CD4-positive, alpha-beta memory T cell (primary cell): ENCODE measurements at regions of chr18 and their contacts with region 1.

Region 1: DNA sequence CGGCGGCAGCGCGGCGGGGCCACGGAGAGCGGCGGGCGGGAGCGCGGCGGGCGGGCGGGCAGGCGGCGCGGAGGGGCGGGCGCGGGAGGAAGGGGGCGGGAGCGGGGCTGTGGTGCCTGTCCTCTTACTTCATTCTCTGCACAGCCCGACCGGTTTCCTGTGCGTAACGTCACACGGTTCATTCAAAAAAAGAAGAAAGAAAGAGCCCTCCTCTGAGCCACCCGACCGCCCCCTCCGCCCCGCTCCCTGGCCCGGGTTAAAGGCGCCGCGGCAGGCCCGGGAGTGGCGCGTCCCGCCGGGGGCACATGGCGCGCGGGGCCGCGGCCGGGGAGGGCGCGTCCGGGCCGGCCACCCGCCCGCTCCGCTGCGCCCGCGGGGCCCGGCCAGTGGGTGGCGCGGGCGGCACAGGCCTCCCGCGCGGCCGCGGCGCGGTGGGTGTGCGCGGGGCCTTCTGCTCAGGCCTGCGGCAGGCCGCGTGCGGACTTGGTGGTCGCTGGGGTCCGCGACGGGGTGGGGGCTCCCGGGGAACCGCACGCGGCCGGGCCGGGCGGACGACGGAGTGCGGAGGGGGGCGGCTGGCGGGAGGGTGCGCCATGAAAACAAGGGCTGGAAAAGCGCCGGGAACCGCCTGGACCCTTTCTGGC is 599 bp upstream of the BCL2 start:
- DNase-seq: peak; percentile 88 to 95 (median 91)
- H3K4me3 ChIP-seq: peak overlapping the region in 1 of 2 donors; percentile 48
- H3K4me3 Mint-ChIP-seq: peak overlapping the region; percentile 86 to 99 (median 90)
- H3K27ac ChIP-seq: peak overlapping the region; percentile 58
- H3K27ac Mint-ChIP-seq: peak overlapping the region; percentile 91 to 97 (median 95)
- H3K4me1 ChIP-seq: peaks cover 32% of the 10 kb centered on the region
- H3K4me1 Mint-ChIP-seq: peaks cover 18 to 65% (median 28%) of the 10 kb centered on the region in 4 donors
- H3K27me3 ChIP-seq: no peaks in the 10 kb centered on the region
- H3K27me3 Mint-ChIP-seq: no peaks in the 10 kb centered on the region

Region 2: GRCh38 chr18:61876899-61877298 is 1443.3 kb before region 1 on chr18:
- CTCF ChIA-PET with region 1: no interaction called
- POLR2A ChIA-PET with region 1: no interaction called
- intact Hi-C with region 1: no loop called
- DNase-seq: no peak
- H3K4me3 ChIP-seq: no peak overlapping the region
- H3K4me3 Mint-ChIP-seq: no peak overlapping the region
- H3K27ac ChIP-seq: no peak overlapping the region
- H3K27ac Mint-ChIP-seq: no peak overlapping the region
- H3K4me1 ChIP-seq: no peaks in the 10 kb centered on the region
- H3K4me1 Mint-ChIP-seq: no peaks in the 10 kb centered on the region
- H3K27me3 ChIP-seq: no peaks in the 10 kb centered on the region
- H3K27me3 Mint-ChIP-seq: peaks cover 7 to 12% of the 10 kb centered on the region in 2 donors

Region 3: GRCh38 chr18:62802523-62802922 is 517.6 kb before region 1 on chr18:
- CTCF ChIA-PET with region 1: no interaction called
- POLR2A ChIA-PET with region 1: no interaction called
- intact Hi-C with region 1: no loop called
- DNase-seq: no peak
- H3K4me3 ChIP-seq: no peak overlapping the region
- H3K4me3 Mint-ChIP-seq: no peak overlapping the region
- H3K27ac ChIP-seq: no peak overlapping the region
- H3K27ac Mint-ChIP-seq: no peak overlapping the region
- H3K4me1 ChIP-seq: no peaks in the 10 kb centered on the region
- H3K4me1 Mint-ChIP-seq: peaks cover 0 to 2% (median 0%) of the 10 kb centered on the region in 4 donors
- H3K27me3 ChIP-seq: no peaks in the 10 kb centered on the region
- H3K27me3 Mint-ChIP-seq: no peaks in the 10 kb centered on the region

Region 4: GRCh38 chr18:63016270-63016669 is 303.9 kb before region 1 on chr18:
- CTCF ChIA-PET with region 1: interaction called, 113 read pairs
- POLR2A ChIA-PET with region 1: interaction called, 8 read pairs
- intact Hi-C with region 1: no loop called
- DNase-seq: peak; percentile 51 to 62 (median 56)
- H3K4me3 ChIP-seq: no peak overlapping the region
- H3K4me3 Mint-ChIP-seq: no peak overlapping the region
- H3K27ac ChIP-seq: no peak overlapping the region
- H3K27ac Mint-ChIP-seq: no peak overlapping the region
- H3K4me1 ChIP-seq: no peaks in the 10 kb centered on the region
- H3K4me1 Mint-ChIP-seq: peaks cover 0 to 2% (median 0%) of the 10 kb centered on the region in 4 donors
- H3K27me3 ChIP-seq: peaks cover 5% of the 10 kb centered on the region
- H3K27me3 Mint-ChIP-seq: peaks cover 5 to 6% of the 10 kb centered on the region in 2 donors

Region 5: GRCh38 chr18:63138436-63139340 is 181.5 kb before region 1 on chr18:
- CTCF ChIA-PET with region 1: interaction called, 175 read pairs
- POLR2A ChIA-PET with region 1: interaction called, 42 read pairs
- intact Hi-C with region 1: loop called (anchors 1 kb)
- DNase-seq: no peak
- H3K4me3 ChIP-seq: peak overlapping the region; percentile 23 to 53
- H3K4me3 Mint-ChIP-seq: peak overlapping the region; percentile 82 to 92 (median 88)
- H3K27ac ChIP-seq: peak overlapping the region; percentile 32
- H3K27ac Mint-ChIP-seq: peak overlapping the region; percentile 76 to 96 (median 94)
- H3K4me1 ChIP-seq: peaks cover 70% of the 10 kb centered on the region
- H3K4me1 Mint-ChIP-seq: peaks cover 57 to 90% (median 73%) of the 10 kb centered on the region in 4 donors
- H3K27me3 ChIP-seq: no peaks in the 10 kb centered on the region
- H3K27me3 Mint-ChIP-seq: no peaks in the 10 kb centered on the region

Region 6: GRCh38 chr18:63199743-63200241 is 120.4 kb before region 1 on chr18:
- CTCF ChIA-PET with region 1: interaction called, 32 read pairs
- POLR2A ChIA-PET with region 1: interaction called, 29 read pairs
- intact Hi-C with region 1: loop called (anchors 2 kb)
- DNase-seq: peak; percentile 66 to 76 (median 71)
- H3K4me3 ChIP-seq: peak overlapping the region; percentile 64 to 65
- H3K4me3 Mint-ChIP-seq: no peak overlapping the region
- H3K27ac ChIP-seq: peak overlapping the region; percentile 59
- H3K27ac Mint-ChIP-seq: no peak overlapping the region
- H3K4me1 ChIP-seq: peaks cover 85% of the 10 kb centered on the region
- H3K4me1 Mint-ChIP-seq: peaks cover 28 to 37% (median 31%) of the 10 kb centered on the region in 4 donors
- H3K27me3 ChIP-seq: no peaks in the 10 kb centered on the region
- H3K27me3 Mint-ChIP-seq: no peaks in the 10 kb centered on the region

Region 7: DNA sequence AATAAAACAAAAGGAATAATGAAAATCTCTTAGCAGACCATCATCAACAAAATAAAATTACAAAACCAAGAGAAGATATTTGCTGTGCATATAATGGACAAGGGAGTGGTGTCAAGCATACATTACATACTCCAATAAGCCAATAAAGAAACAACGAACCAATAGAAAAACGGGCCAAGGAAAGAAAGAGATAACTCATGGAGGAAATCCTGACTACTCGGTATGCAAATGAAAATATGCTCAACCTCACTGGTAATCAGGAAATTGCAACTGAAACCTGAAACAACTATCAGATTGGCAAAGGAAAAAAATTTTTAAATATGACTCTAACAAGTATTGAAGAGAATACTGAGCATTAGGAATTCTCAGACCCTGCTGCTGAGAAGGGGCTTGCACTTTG is 85.3 kb before region 1 on chr18:
- CTCF ChIA-PET with region 1: interaction called, 9 read pairs
- POLR2A ChIA-PET with region 1: interaction called, 22 read pairs
- intact Hi-C with region 1: no loop called
- DNase-seq: no peak
- H3K4me3 ChIP-seq: no peak overlapping the region
- H3K4me3 Mint-ChIP-seq: peak overlapping the region; percentile 16 to 80 (median 59)
- H3K27ac ChIP-seq: peak overlapping the region; percentile 21
- H3K27ac Mint-ChIP-seq: peak overlapping the region; percentile 53 to 92 (median 84)
- H3K4me1 ChIP-seq: peaks cover 49% of the 10 kb centered on the region
- H3K4me1 Mint-ChIP-seq: peaks cover 53 to 83% (median 67%) of the 10 kb centered on the region in 4 donors
- H3K27me3 ChIP-seq: no peaks in the 10 kb centered on the region
- H3K27me3 Mint-ChIP-seq: no peaks in the 10 kb centered on the region

Region 8: DNA sequence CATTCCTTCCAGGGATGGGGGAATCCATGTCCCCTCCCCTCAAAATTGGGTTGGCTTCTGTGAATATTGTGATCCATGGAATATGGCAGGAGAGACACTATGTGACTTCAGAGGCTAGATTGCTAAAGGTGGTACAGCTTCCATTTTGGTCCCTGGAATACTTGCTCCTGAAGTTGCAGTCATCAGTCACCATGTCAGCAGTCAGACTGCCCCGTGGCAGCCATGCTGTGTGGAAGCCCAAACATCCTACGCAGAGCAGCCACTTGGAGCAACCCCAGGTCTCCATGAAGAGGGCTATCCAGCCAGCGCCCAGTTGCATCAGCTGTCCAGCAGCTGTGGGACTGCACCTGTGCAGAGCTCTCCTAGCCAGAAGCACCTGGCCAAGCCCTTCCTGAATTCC is 62.7 kb after region 1 on chr18:
- CTCF ChIA-PET with region 1: no interaction called
- POLR2A ChIA-PET with region 1: no interaction called
- intact Hi-C with region 1: no loop called
- DNase-seq: no peak
- H3K4me3 ChIP-seq: no peak overlapping the region
- H3K4me3 Mint-ChIP-seq: no peak overlapping the region
- H3K27ac ChIP-seq: no peak overlapping the region
- H3K27ac Mint-ChIP-seq: no peak overlapping the region
- H3K4me1 ChIP-seq: peaks cover 11% of the 10 kb centered on the region
- H3K4me1 Mint-ChIP-seq: peaks cover 9 to 17% (median 14%) of the 10 kb centered on the region in 4 donors
- H3K27me3 ChIP-seq: no peaks in the 10 kb centered on the region
- H3K27me3 Mint-ChIP-seq: no peaks in the 10 kb centered on the region

Region 9: GRCh38 chr18:63422087-63422809 is 102.1 kb after region 1 on chr18 and contains the start of gene VPS4B:
- CTCF ChIA-PET with region 1: no interaction called
- POLR2A ChIA-PET with region 1: interaction called, 18 read pairs
- intact Hi-C with region 1: loop called (anchors 1 kb)
- DNase-seq: peak; percentile 99 to 100 (median 100)
- H3K4me3 ChIP-seq: peak within 1 kb of the TSS; percentile 73 to 98
- H3K4me3 Mint-ChIP-seq: peak within 1 kb of the TSS; percentile 94 to 100 (median 96)
- H3K27ac ChIP-seq: peak within 1 kb of the TSS; percentile 98
- H3K27ac Mint-ChIP-seq: peak within 1 kb of the TSS; percentile 94 to 99 (median 97)
- H3K4me1 ChIP-seq: peaks cover 55% of the 10 kb centered on the region
- H3K4me1 Mint-ChIP-seq: peaks cover 19 to 29% (median 21%) of the 10 kb centered on the region in 4 donors
- H3K27me3 ChIP-seq: no peaks in the 10 kb centered on the region
- H3K27me3 Mint-ChIP-seq: peaks cover 3 to 5% of the 10 kb centered on the region in 2 donors
- total RNA-seq, gene VPS4B: 93.0 to 94.9 TPM

Region 10: GRCh38 chr18:63492851-63493250 is 172.7 kb after region 1 on chr18:
- CTCF ChIA-PET with region 1: no interaction called
- POLR2A ChIA-PET with region 1: no interaction called
- intact Hi-C with region 1: no loop called
- DNase-seq: no peak
- H3K4me3 ChIP-seq: no peak overlapping the region
- H3K4me3 Mint-ChIP-seq: no peak overlapping the region
- H3K27ac ChIP-seq: no peak overlapping the region
- H3K27ac Mint-ChIP-seq: no peak overlapping the region
- H3K4me1 ChIP-seq: no peaks in the 10 kb centered on the region
- H3K4me1 Mint-ChIP-seq: no peaks in the 10 kb centered on the region
- H3K27me3 ChIP-seq: no peaks in the 10 kb centered on the region
- H3K27me3 Mint-ChIP-seq: peaks cover 0 to 9% of the 10 kb centered on the region in 2 donors